ENCODE measurements at regions of chr4 and their contacts with region 1.

Region 1: DNA sequence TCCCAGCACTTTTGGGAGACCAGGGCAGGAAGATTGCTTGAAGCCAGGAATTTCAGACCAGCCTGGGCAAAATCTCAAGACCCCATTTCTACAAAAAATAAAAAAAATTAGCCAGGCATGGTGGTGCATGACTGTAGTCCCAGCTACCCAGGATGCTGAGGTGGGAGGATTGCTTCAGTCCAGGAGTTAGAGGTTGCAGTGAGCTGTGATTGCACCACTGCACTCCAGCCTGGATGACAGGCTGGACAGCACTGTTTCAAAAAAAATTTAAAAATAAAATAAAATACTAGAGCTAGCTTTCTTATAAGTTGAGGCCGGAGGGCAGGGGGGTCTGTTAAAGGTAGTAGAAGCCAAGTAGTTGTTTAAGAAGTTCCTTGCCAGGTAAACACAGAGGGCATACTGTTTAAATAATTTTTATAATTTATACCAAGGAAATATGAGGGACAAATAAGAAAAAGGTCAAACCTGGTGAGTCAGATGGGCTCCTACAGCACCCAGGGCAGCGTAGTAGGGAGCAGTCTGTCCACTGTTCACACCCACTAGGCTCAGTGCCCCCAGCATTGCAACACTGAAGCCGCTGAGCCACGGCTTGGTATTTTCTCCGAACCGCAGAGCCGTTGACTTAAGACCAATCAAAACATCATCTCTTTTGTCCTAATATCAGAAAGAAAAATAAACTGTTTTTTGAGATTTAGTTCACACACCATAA is 17.3 kb downstream of the COQ2 start:
- DNase-seq: peak; percentile 67
- ATAC-seq: peak; percentile 98

Region 2: DNA sequence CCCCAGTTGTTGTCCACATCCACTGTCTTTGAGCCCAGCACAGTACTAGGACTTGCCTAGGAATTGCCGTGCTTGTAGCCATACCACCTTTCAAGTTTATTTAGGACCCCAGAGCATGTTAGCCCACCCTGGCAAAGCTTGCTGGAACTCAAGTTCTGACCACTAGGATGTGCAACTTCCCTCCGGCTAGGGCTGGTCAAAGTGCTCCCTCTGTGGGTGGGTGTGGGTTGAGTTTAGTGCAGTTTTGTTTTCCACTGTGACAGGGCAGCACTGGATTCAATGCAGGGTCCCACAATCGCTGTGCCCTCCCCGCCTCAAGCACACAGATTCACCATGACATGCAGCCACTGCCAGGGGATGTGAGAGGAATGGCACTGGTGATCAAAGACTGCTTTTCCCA is 1891.5 kb before region 1 on chr4:
- intact Hi-C with region 1: no loop called
- DNase-seq: no peak
- ATAC-seq: no peak

Region 3: DNA sequence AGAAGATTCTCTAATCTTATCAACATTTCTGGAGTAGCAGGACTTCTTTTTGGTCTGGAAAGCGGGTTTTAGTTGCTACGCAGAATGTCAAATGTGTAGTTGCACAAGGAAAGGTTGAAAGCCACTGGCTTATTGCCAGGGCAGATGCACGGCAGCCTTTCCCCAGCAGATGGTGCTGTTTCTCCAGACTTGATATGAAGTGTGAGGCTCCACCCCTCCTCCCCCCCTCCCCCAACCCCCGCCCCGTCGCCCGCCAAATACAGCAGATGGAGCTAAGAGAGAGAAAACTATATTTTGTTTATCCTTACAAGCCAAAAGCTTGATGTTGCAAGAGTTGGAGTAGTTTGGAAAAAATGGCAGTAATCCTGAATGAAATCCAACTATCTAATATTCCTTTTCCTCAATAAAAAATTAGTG is 804.9 kb before region 1 on chr4:
- intact Hi-C with region 1: loop called (anchors 10 kb)
- DNase-seq: peak; percentile 92
- ATAC-seq: peak; percentile 95

Region 4: GRCh38 chr4:83320548-83320947 is 53.3 kb after region 1 on chr4:
- intact Hi-C with region 1: no loop called
- DNase-seq: peak; percentile 66
- ATAC-seq: peak; percentile 85